ENCODE measurements at regions of chrX and their contacts with region 1.

Region 1: DNA sequence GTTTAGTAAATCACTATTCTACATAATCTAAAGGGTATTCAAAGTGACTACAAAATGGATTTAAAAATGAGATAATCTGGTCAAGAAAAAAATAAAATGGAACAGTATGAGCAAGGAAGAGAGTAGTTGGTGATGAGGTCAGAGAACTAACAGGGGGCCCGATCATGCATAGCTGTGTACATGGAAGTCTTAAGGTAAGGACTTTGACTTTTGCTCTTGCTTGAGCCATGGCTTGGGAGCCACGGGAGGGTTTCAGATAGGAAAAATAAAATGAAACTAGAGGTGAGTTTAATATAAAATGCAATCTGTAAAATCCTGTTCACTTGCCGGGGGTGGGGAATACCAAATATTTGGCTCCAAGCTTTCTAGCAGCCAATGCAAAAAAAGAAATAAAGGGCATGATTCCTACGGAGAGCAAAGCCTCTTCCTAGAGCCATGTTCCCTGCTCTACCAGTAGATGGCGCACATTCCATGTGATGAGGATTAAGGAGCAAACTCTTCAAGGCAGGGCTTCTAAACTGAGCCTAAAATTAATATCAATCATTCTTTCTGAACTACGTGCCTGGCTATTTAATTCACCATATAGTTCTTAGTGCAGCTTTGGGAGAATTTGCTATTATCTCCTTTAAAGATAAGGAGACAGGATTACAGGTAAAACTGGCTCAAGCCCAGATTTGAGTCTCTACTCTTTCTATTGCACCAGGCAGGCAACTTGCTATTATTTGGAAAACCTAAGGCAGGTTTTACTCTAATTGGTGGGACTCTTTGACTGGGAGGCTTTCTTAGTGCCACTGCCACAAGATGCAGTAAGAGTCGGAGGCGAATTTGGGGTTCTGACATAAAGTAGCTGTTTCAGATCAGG is 6.8 kb upstream of the CLCN5 start:
- DNase-seq: peak; percentile 56
- H3K4me3 Mint-ChIP-seq: no peak overlapping the region
- H3K27ac Mint-ChIP-seq: no peak overlapping the region
- H3K4me1 Mint-ChIP-seq: peaks cover under 1% of the 10 kb centered on the region
- H3K27me3 Mint-ChIP-seq: no peaks in the 10 kb centered on the region

Region 2: GRCh38 chrX:49291615-49292337 is 623.8 kb before region 1 on chrX:
- CTCF ChIA-PET with region 1: no interaction called
- intact Hi-C with region 1: loop called (anchors 5 kb)
- DNase-seq: peak; percentile 88
- H3K4me3 Mint-ChIP-seq: no peak overlapping the region
- H3K27ac Mint-ChIP-seq: no peak overlapping the region
- H3K4me1 Mint-ChIP-seq: peaks cover 35% of the 10 kb centered on the region
- H3K27me3 Mint-ChIP-seq: no peaks in the 10 kb centered on the region

Region 3: GRCh38 chrX:49767236-49767635 is 148.4 kb before region 1 on chrX:
- CTCF ChIA-PET with region 1: no interaction called
- intact Hi-C with region 1: no loop called
- DNase-seq: no peak
- H3K4me3 Mint-ChIP-seq: no peak overlapping the region
- H3K27ac Mint-ChIP-seq: no peak overlapping the region
- H3K4me1 Mint-ChIP-seq: no peaks in the 10 kb centered on the region
- H3K27me3 Mint-ChIP-seq: no peaks in the 10 kb centered on the region

Region 4: DNA sequence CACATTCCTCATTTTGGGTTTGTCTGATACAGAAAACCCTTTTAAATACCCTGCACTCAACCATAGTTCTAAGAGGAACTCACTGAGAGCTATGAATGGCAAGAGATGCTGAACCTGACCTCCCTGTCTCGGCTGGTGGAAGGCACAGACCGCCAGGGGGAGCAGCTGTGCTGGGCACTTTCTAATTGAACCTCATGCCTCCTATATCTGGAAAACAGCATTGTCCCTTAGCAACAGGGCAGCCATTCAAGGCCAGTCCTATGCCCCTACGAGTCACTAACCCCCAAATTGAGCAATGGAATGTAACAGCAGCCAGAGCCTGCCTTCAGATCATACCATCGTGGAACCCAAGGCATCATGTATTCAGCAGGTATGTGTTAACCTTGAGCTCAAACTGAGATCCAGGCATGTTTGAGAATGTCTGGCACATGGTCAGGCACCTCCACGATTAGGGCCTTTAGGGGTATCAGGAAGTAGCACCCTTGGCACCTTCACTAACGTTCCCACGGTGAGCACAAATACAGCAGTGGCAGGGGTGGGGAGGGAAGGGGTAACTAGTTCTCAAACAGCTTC is 31.2 kb before region 1 on chrX:
- CTCF ChIA-PET with region 1: interaction called, 23 read pairs
- intact Hi-C with region 1: loop called (anchors 1 kb)
- DNase-seq: peak; percentile 73
- H3K4me3 Mint-ChIP-seq: no peak overlapping the region
- H3K27ac Mint-ChIP-seq: no peak overlapping the region
- H3K4me1 Mint-ChIP-seq: peaks cover 21% of the 10 kb centered on the region
- H3K27me3 Mint-ChIP-seq: no peaks in the 10 kb centered on the region

Region 5: GRCh38 chrX:50081282-50081889 is 165.8 kb after region 1 on chrX:
- CTCF ChIA-PET with region 1: no interaction called
- intact Hi-C with region 1: loop called (anchors 1 kb)
- DNase-seq: peak; percentile 47
- H3K4me3 Mint-ChIP-seq: no peak overlapping the region
- H3K27ac Mint-ChIP-seq: no peak overlapping the region
- H3K4me1 Mint-ChIP-seq: no peaks in the 10 kb centered on the region
- H3K27me3 Mint-ChIP-seq: no peaks in the 10 kb centered on the region

Region 6: GRCh38 chrX:50204364-50204899 is 288.8 kb after region 1 on chrX and contains the start of gene CCNB3:
- CTCF ChIA-PET with region 1: interaction called, 4 read pairs
- intact Hi-C with region 1: loop called (anchors 1 kb)
- DNase-seq: peak; percentile 74
- H3K4me3 Mint-ChIP-seq: peak within 1 kb of the TSS; percentile 71
- H3K27ac Mint-ChIP-seq: peak within 1 kb of the TSS; percentile 79
- H3K4me1 Mint-ChIP-seq: peaks cover 11% of the 10 kb centered on the region
- H3K27me3 Mint-ChIP-seq: no peaks in the 10 kb centered on the region
- total RNA-seq, gene CCNB3: 0.37 to 0.79 TPM

Region 7: GRCh38 chrX:50579955-50580354 is 664.4 kb after region 1 on chrX:
- CTCF ChIA-PET with region 1: no interaction called
- intact Hi-C with region 1: loop called (anchors 1 kb)
- DNase-seq: peak; percentile 46
- H3K4me3 Mint-ChIP-seq: no peak overlapping the region
- H3K27ac Mint-ChIP-seq: no peak overlapping the region
- H3K4me1 Mint-ChIP-seq: no peaks in the 10 kb centered on the region
- H3K27me3 Mint-ChIP-seq: peaks cover 2% of the 10 kb centered on the region